ENCODE measurements at regions of chr5 and their contacts with region 1.

Region 1: DNA sequence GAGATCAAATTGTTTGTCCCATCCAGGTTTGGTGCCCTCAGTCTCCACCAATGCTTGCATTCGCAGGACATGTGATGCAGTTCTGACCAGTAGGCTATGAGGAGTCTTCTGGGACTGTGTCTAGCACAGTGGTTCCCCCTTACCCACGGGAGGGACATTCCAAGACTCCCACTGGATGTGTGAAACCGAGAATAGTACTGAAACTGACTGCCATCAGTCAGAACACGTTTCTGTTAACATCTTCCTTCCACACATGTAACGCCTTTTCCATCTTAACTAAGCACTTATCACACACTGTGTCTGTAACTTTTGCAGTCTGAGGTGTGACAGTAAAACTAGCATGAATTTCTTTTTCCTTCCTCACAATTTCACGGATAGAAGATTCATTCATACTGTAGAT is 74.7 kb downstream of the PTTG1 start:
- DNase-seq: no peak
- H3K4me3 Mint-ChIP-seq: no peak overlapping the region
- H3K27ac Mint-ChIP-seq: peak overlapping the region; percentile 69
- H3K4me1 Mint-ChIP-seq: peaks cover 29% of the 10 kb centered on the region
- H3K27me3 Mint-ChIP-seq: no peaks in the 10 kb centered on the region

Region 2: DNA sequence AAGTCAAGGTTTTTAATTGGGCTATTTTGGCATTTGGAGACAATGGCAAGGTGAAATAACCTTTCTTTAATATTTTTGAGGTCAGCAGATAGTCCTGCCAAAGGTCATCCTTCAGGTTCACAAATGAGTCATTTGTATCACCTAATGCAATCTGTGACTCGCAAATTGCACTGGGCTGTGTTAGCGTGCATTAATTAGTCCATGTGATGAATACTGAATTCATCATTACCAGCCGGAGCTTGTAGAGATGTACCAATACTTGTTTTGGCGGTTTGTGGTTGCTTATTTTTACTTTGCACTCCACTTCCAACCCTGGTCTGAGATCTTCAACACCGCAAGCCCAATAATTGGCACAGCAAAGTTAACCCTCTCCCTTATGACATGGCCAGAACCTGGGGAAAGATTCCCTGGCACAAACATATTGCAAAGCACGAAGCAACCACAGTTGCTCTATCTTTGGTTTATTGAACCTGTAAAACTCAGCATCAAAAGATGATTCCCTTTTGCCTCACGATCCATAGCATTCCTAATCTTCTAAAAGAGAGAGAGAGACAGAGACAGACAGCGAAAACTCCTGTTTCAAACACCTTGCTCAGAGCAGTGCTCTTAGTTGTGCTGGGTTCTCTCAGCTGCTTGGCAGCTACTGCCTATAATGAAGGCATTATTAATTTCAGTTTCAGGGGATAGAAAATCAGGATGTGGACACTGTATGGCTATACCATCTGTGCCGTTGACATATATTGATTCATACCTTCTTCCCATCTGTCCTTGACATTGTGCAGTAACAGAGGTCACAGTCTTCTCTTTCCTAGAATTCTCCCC is 1574.7 kb before region 1 on chr5:
- intact Hi-C with region 1: no loop called
- DNase-seq: no peak
- H3K4me3 Mint-ChIP-seq: no peak overlapping the region
- H3K27ac Mint-ChIP-seq: no peak overlapping the region
- H3K4me1 Mint-ChIP-seq: no peaks in the 10 kb centered on the region
- H3K27me3 Mint-ChIP-seq: peaks cover 3% of the 10 kb centered on the region

Region 3: DNA sequence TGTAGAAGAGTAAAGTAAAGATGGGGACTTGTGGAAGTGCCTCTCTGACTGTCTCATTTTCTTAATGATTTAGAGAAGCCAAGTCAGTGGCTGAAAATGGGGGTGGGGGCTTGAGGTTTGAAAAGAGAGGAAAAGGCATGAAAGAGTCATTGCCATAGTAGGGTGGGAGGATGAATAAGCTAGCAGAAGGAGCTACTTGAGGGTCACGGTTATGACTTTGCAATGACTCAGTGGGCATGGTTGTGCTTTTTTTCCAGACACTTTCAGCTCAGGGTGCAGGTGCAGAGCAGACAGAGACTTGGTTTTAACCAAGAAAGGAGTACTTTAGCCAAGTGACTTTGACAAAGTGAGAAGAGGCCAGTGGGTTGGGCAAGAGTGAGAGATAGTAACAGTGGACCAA is 43.1 kb after region 1 on chr5:
- intact Hi-C with region 1: loop called (anchors 1 kb)
- DNase-seq: no peak
- H3K4me3 Mint-ChIP-seq: no peak overlapping the region
- H3K27ac Mint-ChIP-seq: no peak overlapping the region
- H3K4me1 Mint-ChIP-seq: peaks cover 19% of the 10 kb centered on the region
- H3K27me3 Mint-ChIP-seq: no peaks in the 10 kb centered on the region

Region 4: DNA sequence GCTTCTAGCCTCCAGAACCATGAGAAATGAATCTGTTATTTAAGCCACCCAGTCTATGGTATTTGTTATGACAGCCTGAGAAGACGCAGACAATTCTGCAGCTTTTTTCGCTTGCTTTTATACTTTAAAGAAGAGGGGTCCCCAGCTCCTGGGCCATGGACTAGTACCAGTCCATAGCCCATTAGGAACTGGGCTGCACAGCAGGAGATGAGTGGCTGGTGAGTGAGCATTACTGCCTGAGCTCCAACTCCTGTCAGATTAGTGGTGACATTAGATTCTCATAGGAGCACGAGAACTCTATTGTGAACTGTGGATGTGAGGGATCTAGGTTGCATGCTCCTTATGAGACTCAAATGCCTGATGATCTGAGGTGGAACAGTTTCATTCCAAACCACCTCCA is 77.0 kb after region 1 on chr5:
- intact Hi-C with region 1: no loop called
- DNase-seq: no peak
- H3K4me3 Mint-ChIP-seq: no peak overlapping the region
- H3K27ac Mint-ChIP-seq: no peak overlapping the region
- H3K4me1 Mint-ChIP-seq: no peaks in the 10 kb centered on the region
- H3K27me3 Mint-ChIP-seq: peaks cover 5% of the 10 kb centered on the region

Region 5: DNA sequence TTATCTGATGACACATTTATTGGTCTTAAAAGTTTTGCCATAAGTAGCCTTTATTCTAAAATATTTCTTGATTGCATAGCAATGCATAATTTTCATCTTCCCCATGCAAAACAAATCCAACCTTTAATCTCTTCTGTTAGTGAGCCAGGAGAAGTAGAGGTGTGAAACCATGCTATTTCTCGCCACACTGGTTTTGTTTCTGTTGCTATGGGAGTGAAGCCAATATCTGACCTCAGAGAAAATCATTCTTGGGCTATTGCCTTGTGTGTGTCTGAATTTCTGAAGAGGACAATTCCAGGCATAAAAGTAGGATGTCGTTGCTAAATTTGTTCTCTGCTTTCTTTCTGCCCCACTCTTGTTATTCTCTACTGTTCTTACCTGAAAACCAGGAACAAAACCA is 108.9 kb after region 1 on chr5:
- intact Hi-C with region 1: no loop called
- DNase-seq: no peak
- H3K4me3 Mint-ChIP-seq: no peak overlapping the region
- H3K27ac Mint-ChIP-seq: no peak overlapping the region
- H3K4me1 Mint-ChIP-seq: no peaks in the 10 kb centered on the region
- H3K27me3 Mint-ChIP-seq: peaks cover 2% of the 10 kb centered on the region

Region 6: GRCh38 chr5:161112371-161112770 is 616.0 kb after region 1 on chr5:
- intact Hi-C with region 1: no loop called
- DNase-seq: no peak
- H3K4me3 Mint-ChIP-seq: no peak overlapping the region
- H3K27ac Mint-ChIP-seq: no peak overlapping the region
- H3K4me1 Mint-ChIP-seq: no peaks in the 10 kb centered on the region
- H3K27me3 Mint-ChIP-seq: no peaks in the 10 kb centered on the region

Measured in activated T-helper 1 cell treated with anti-CD3 and anti-CD28 coated beads, Interleukin-12 subunit alpha, Interleukin-12 subunit beta, Interleukin-2, Interleukin-4 antibody, amounts not matched to agents 30 ng/mL and 10 ng/mL and 1 ng/mL, durations not matched to agents 14 hours and 24 hours and 36 hours (primary cell).